ENCODE measurements at regions of chr3 and their contacts with region 1.

Region 1: GRCh38 chr3:90091204-90091924 is 983.9 kb downstream of the EPHA3 start:
- DNase-seq: peak; percentile 54
- H3K4me3 Mint-ChIP-seq: no peak overlapping the region
- H3K27ac Mint-ChIP-seq: no peak overlapping the region
- H3K4me1 Mint-ChIP-seq: no peaks in the 10 kb centered on the region
- H3K27me3 Mint-ChIP-seq: no peaks in the 10 kb centered on the region
- CTCF ChIP-seq: peak; percentile 77

Region 2: DNA sequence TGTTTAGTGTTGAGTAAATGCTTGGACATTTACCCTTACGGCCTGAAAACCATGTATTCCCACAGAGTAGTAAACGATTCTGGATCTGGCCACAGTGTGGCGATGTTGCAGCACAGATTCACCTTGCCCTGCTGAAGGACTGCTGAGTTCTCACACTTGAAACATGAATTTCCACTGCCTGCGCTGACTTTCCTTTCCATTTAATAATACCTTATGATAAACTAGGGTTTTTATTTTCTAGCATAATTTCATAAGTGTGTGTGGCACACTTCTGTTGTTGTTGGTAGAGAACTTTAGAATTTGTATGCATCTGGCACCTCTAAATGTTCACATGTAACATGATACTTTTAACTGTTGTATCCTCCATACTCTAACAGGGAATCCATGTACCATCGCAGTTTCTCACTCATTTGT is 1887.7 kb before region 1 on chr3:
- CTCF ChIA-PET with region 1: interaction called, 34 read pairs
- POLR2A ChIA-PET with region 1: no interaction called
- intact Hi-C with region 1: loop called (anchors 1 kb)
- DNase-seq: peak; percentile 75
- H3K4me3 Mint-ChIP-seq: no peak overlapping the region
- H3K27ac Mint-ChIP-seq: no peak overlapping the region
- H3K4me1 Mint-ChIP-seq: no peaks in the 10 kb centered on the region
- H3K27me3 Mint-ChIP-seq: no peaks in the 10 kb centered on the region
- CTCF ChIP-seq: peak; percentile 91

Region 3: GRCh38 chr3:89113903-89114840 is 977.2 kb before region 1 on chr3:
- CTCF ChIA-PET with region 1: interaction called, 4 read pairs
- POLR2A ChIA-PET with region 1: no interaction called
- intact Hi-C with region 1: loop called (anchors 5 kb)
- DNase-seq: peak; percentile 75
- H3K4me3 Mint-ChIP-seq: peak overlapping the region; percentile 85
- H3K27ac Mint-ChIP-seq: no peak overlapping the region
- H3K4me1 Mint-ChIP-seq: no peaks in the 10 kb centered on the region
- H3K27me3 Mint-ChIP-seq: peaks cover 35% of the 10 kb centered on the region
- CTCF ChIP-seq: peak; percentile 60

Region 4: DNA sequence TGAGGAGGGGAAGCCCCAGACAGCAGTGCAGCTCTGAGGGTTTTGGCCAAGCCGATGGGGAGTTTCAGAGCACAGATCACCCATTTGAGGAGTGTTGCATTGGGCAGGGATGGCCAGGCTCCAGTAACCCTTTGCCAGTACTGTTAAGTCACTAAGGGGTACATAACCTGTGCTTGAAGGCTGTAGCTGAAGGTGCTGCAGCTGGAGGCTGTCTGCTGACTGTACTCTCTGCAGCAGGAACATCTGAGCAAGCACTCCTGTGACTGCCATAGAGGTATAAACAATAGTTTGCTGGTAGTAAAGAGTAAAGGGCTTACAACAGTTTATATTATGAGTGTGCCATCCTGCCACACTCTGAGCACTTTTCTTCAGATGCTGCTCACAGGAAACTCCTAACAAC is 686.2 kb before region 1 on chr3:
- CTCF ChIA-PET with region 1: no interaction called
- POLR2A ChIA-PET with region 1: no interaction called
- intact Hi-C with region 1: loop called (anchors 10 kb)
- DNase-seq: no peak
- H3K4me3 Mint-ChIP-seq: no peak overlapping the region
- H3K27ac Mint-ChIP-seq: no peak overlapping the region
- H3K4me1 Mint-ChIP-seq: no peaks in the 10 kb centered on the region
- H3K27me3 Mint-ChIP-seq: peaks cover 96% of the 10 kb centered on the region
- CTCF ChIP-seq: no peak

Region 5: GRCh38 chr3:89697307-89697916 is 394.0 kb before region 1 on chr3:
- CTCF ChIA-PET with region 1: no interaction called
- POLR2A ChIA-PET with region 1: no interaction called
- intact Hi-C with region 1: no loop called
- DNase-seq: peak; percentile 66
- H3K4me3 Mint-ChIP-seq: no peak overlapping the region
- H3K27ac Mint-ChIP-seq: no peak overlapping the region
- H3K4me1 Mint-ChIP-seq: no peaks in the 10 kb centered on the region
- H3K27me3 Mint-ChIP-seq: no peaks in the 10 kb centered on the region
- CTCF ChIP-seq: no peak

Region 6: DNA sequence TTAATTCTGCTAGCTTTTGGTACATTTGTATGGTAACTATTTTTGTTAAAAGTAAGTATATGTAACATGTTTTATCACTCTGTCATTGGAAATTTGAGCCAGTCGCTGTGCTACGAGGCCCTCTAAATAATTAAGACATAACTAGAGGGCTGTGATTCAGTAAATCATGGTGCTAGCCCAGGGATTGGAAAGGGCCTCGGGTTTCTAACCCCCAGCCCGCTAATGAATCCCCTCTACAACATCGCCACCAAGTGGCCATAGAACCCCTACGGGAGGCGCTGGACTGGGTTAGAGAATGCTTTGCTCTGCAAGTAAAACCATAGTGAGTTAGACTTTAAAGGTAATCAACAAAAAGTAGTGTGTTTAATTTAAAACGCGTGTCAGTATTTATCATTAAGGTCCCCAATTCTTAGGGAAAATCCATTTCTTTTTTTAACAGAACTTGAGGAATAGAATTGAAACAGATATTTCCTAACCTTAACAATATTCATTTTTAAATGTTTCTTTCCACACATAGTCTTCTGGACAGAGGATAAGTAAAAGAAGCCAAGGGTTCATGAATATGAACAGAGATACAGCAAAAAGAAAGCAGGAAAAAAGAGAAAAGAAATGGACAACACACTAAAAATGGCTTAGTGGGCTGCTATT is 239.3 kb before region 1 on chr3:
- CTCF ChIA-PET with region 1: interaction called, 6 read pairs
- POLR2A ChIA-PET with region 1: no interaction called
- intact Hi-C with region 1: loop called (anchors 5 kb)
- DNase-seq: peak; percentile 65
- H3K4me3 Mint-ChIP-seq: no peak overlapping the region
- H3K27ac Mint-ChIP-seq: no peak overlapping the region
- H3K4me1 Mint-ChIP-seq: no peaks in the 10 kb centered on the region
- H3K27me3 Mint-ChIP-seq: no peaks in the 10 kb centered on the region
- CTCF ChIP-seq: peak; percentile 59

Region 7: GRCh38 chr3:90025005-90025404 is 66.4 kb before region 1 on chr3:
- CTCF ChIA-PET with region 1: no interaction called
- POLR2A ChIA-PET with region 1: no interaction called
- intact Hi-C with region 1: no loop called
- DNase-seq: no peak
- H3K4me3 Mint-ChIP-seq: no peak overlapping the region
- H3K27ac Mint-ChIP-seq: no peak overlapping the region
- H3K4me1 Mint-ChIP-seq: peaks cover 6% of the 10 kb centered on the region
- H3K27me3 Mint-ChIP-seq: no peaks in the 10 kb centered on the region
- CTCF ChIP-seq: no peak

Region 8: DNA sequence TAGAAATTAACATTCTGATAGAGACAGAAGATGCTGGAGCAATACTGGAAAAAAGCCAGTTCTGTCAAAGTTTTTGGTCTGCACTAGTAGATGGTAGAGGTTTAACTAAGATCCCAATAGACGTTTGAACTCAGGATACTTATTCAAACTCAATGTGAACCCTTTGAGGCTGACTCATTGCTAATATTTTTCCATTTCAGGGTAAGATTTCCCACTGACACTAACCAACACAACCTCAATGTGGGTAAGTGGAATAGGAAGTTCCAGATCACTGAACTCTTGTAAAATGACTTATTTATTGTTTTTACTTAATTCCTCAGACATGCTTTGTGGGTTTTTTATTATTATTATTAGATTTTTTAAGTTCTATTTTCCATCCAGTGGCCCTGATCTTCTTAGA is 40.8 kb after region 1 on chr3:
- CTCF ChIA-PET with region 1: no interaction called
- POLR2A ChIA-PET with region 1: no interaction called
- intact Hi-C with region 1: no loop called
- DNase-seq: no peak
- H3K4me3 Mint-ChIP-seq: no peak overlapping the region
- H3K27ac Mint-ChIP-seq: no peak overlapping the region
- H3K4me1 Mint-ChIP-seq: peaks cover 6% of the 10 kb centered on the region
- H3K27me3 Mint-ChIP-seq: no peaks in the 10 kb centered on the region
- CTCF ChIP-seq: no peak